ENCODE measurements at regions of chr5 and their contacts with region 1.

Region 1: DNA sequence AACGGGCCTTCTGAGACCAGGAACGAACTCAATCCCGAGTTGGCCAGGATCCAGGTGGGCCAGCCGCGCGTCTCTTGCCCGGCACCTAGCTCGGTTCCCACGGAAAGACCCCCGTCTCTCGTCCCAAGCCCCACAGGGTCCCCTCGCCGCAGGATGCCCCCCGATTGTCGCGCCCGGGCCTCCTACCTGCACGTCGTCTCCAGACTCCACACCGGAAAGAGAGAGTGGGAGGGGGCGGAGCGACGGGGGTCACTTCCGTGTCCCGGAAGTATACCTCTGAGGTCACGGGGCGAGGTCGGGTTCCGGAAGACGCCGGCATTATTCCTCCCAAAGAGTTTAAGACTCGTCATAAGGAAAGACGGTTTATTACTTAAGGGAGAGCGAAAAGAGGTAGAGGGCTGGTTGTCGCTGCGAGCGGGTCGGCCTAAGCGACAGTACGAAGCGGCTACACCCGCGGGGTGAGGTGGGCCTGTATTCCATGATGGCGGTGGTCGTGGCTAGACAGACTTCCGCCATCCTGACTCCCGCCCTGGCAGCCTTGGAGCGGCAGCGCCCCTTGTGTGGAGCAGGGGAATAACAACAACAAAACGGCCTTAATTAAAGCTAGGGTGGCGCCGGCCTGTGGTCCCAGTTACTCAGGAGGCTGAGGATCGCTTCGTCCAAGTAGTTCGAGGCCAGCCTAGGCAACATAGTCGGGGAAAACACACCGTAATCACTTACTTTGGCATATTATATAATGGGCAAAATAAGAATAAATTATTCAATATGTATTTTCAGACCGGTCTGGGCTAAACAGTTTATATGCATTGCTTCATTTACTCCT is at the start of gene RPS14:
- ATAC-seq: peak; percentile 94 to 98 (median 96)
- H3K4me3 ChIP-seq: peak within 1 kb of the TSS; percentile 66 to 96 (median 74)
- H3K27ac ChIP-seq: peak within 1 kb of the TSS; percentile 99
- H3K4me1 ChIP-seq: peaks cover 0 to 10% of the 10 kb centered on the region in 2 donors
- total RNA-seq, gene RPS14: 1,897 to 6,053 (median 4,324) TPM

Region 2: GRCh38 chr5:150656191-150657132 is 206.7 kb after region 1 on chr5:
- in situ Hi-C with region 1: loop called in 2 of 9 experiments (anchors 25 kb)
- ATAC-seq: peak; percentile 70 to 93 (median 85)
- H3K4me3 ChIP-seq: peak overlapping the region; percentile 48 to 58 (median 55)
- H3K27ac ChIP-seq: no peak overlapping the region
- H3K4me1 ChIP-seq: peaks cover 11 to 29% of the 10 kb centered on the region in 2 donors

Region 3: DNA sequence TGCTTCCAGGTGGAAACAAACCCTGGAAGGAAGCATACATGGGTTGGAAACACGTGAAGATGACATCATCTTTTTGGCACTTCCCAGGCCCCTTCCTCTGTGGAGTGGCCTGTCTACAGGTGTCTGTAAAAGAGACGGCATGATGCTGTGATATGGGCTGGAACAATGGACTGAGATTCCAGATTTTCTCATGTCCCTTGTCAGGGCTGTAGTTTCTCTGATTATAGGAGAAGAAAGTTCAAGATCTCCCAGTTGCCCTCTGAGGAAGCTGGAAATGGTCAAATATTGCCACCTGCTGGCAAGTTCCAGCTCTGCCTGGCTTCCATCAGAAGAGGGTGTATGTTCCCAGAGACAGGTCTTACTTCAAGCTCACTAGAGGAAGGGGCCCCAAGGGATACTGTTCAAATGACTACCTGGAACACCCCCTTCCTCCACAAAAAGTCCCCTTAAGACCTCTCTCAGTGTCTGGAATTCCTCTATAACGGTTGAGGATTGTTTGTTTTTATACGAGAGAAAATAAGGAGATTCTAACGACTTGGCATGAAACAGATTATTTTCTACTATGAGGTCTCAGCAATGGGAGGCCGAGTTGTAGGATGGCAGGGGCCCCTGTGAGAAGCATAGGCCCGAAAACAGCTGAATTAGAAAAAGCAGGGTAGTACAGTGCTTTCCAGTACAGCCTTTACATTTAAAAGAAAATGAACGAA is 715.1 kb after region 1 on chr5:
- in situ Hi-C with region 1: loop called in 1 of 9 experiments (anchors 25 kb)
- ATAC-seq: peak; percentile 91 to 100 (median 98)
- H3K4me3 ChIP-seq: no peak overlapping the region
- H3K27ac ChIP-seq: no peak overlapping the region
- H3K4me1 ChIP-seq: no peaks in the 10 kb centered on the region